ENCODE measurements at regions of chr9 and their contacts with region 1.

Region 1: GRCh38 chr9:72292256-72292682 is 72.7 kb downstream of the ZFAND5 start:
- DNase-seq: peak; percentile 27
- H3K4me3 ChIP-seq: no peak overlapping the region
- H3K27ac ChIP-seq: no peak overlapping the region
- H3K4me1 ChIP-seq: no peaks in the 10 kb centered on the region; a peak in 1 of 4 replicates
- H3K27me3 ChIP-seq: peaks cover 8% of the 10 kb centered on the region; the same call in 1 of the 2 replicates
- CTCF ChIP-seq: peak; percentile 64
- EP300 ChIP-seq: no peak
- RAD21 ChIP-seq: peak; percentile 68

Region 2: GRCh38 chr9:72280913-72281500 is 11.3 kb before region 1 on chr9:
- CTCF ChIA-PET with region 1: interaction called, 14 read pairs
- POLR2A ChIA-PET with region 1: no interaction called
- DNase-seq: peak; percentile 59
- H3K4me3 ChIP-seq: peak overlapping the region in 1 of 2 experiments; percentile 47; a peak in 1 of 4 replicates
- H3K27ac ChIP-seq: no peak overlapping the region
- H3K4me1 ChIP-seq: no peaks in the 10 kb centered on the region
- H3K27me3 ChIP-seq: peaks cover 38% of the 10 kb centered on the region; the same call in 1 of the 2 replicates
- CTCF ChIP-seq: peak; percentile 98
- EP300 ChIP-seq: no peak
- RAD21 ChIP-seq: peak; percentile 90

Region 3: GRCh38 chr9:72315510-72316311 is 23.4 kb after region 1 on chr9:
- CTCF ChIA-PET with region 1: interaction called, 10 read pairs
- POLR2A ChIA-PET with region 1: no interaction called
- DNase-seq: no peak
- H3K4me3 ChIP-seq: no peak overlapping the region
- H3K27ac ChIP-seq: no peak overlapping the region
- H3K4me1 ChIP-seq: peaks cover 0 to 2% of the 10 kb centered on the region in 2 experiments; a peak in 1 of 4 replicates
- H3K27me3 ChIP-seq: 0 out of 2 replicates have a peak, but pooled peaks cover 5% of the 10 kb centered on the region
- CTCF ChIP-seq: no peak
- EP300 ChIP-seq: no peak
- RAD21 ChIP-seq: no peak

Region 4: GRCh38 chr9:72454871-72455491 is 162.7 kb after region 1 on chr9:
- CTCF ChIA-PET with region 1: no interaction called
- POLR2A ChIA-PET with region 1: no interaction called
- DNase-seq: no peak
- H3K4me3 ChIP-seq: no peak overlapping the region
- H3K27ac ChIP-seq: no peak overlapping the region
- H3K4me1 ChIP-seq: no peaks in the 10 kb centered on the region
- H3K27me3 ChIP-seq: peaks cover 10% of the 10 kb centered on the region; the same call in 1 of the 2 replicates
- CTCF ChIP-seq: no peak
- EP300 ChIP-seq: no peak
- RAD21 ChIP-seq: no peak

Measured in SK-N-SH (cell line).